ENCODE measurements at regions of chr22 and their contacts with region 1.

Region 1: DNA sequence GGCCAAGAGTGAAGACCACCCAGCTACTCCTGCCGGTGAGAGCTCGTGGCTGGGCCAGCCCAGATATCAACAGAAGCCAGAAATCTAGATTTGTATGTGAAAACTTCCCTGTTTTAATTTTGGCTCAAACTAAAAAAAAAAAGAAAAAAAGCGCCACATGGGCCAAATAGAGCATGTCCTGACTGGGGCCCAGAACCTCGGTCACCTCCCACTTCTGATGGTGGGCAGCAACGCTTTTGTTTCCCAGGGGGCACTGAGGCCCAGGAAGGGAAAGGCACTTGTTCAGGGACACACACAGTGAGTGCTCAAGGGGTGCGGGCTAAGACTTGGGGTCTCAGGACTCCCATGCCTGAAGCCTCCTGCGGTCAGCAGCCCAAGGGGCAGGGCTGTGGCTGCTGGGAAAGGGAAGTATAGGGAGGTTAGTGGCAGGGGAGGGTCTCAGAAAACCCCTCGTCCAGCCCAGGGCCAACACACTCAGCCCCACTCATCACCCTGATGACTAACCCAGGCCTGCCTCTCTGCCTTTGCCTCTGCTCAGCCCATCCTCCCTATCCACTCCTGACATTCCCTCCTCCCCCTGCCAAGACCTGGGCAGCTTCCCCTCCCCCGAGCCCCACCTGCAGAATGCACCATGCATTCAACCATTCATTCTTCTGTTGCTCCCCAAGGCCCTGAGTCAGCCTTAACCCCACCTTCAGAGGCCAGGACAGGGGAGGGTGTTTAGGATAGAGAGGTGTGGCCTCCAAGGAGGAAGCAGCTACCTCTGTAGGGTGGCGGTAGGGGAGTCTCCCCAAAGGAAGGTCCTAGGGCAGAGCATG is 30.0 kb upstream of the TCF20 start:
- DNase-seq: peak; percentile 46
- ATAC-seq: peak; percentile 94
- H3K4me3 Mint-ChIP-seq: peak overlapping the region; percentile 81
- H3K27ac Mint-ChIP-seq: peak overlapping the region; percentile 88
- H3K4me1 Mint-ChIP-seq: peaks cover 53% of the 10 kb centered on the region
- H3K27me3 Mint-ChIP-seq: peaks cover 3% of the 10 kb centered on the region
- CTCF ChIP-seq: no peak

Region 2: DNA sequence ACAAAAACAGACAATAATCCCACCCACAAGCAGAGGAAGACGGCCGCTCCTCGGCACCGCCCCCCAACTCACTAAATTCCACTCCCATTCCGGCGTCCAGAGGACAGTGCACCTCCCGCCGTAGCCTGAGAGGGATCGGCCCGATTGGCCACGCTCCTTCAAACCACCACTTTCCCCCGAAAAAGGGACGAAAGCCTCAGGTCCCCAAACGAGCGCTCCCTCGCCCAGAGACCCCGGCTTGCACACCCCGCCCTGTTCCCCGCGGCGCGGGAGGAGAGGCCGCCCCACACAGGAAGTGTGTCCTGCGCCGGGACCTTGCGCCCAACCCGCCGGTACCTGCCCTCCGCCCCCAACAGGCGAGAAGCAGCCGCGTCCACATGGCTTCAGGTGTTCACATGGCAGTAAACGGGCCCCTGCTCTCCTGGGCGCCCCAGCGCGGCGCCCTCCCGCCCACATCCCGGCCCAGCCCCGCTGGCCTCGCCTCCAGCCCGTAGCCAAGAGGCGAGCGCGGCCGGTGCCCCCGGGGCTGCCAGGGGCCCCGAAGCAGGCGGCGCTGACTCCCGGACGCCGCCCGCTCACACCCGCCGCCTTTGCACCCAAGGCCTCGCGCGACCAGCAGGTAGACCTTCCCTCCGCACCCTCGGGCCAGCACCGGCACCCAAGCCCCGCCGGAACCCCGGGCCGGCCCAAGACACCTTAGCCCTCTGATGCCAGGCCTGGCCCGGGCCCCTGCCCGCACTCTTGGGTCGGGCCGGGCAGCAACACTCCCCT is 30.9 kb before region 1 on chr22:
- CTCF ChIA-PET with region 1: no interaction called
- POLR2A ChIA-PET with region 1: interaction called, 3 read pairs
- intact Hi-C with region 1: loop called (anchors 1 kb)
- DNase-seq: peak; percentile 60
- ATAC-seq: peak; percentile 55
- H3K4me3 Mint-ChIP-seq: peak overlapping the region; percentile 82
- H3K27ac Mint-ChIP-seq: peak overlapping the region; percentile 79
- H3K4me1 Mint-ChIP-seq: peaks cover 34% of the 10 kb centered on the region
- H3K27me3 Mint-ChIP-seq: no peaks in the 10 kb centered on the region
- CTCF ChIP-seq: no peak

Region 3: DNA sequence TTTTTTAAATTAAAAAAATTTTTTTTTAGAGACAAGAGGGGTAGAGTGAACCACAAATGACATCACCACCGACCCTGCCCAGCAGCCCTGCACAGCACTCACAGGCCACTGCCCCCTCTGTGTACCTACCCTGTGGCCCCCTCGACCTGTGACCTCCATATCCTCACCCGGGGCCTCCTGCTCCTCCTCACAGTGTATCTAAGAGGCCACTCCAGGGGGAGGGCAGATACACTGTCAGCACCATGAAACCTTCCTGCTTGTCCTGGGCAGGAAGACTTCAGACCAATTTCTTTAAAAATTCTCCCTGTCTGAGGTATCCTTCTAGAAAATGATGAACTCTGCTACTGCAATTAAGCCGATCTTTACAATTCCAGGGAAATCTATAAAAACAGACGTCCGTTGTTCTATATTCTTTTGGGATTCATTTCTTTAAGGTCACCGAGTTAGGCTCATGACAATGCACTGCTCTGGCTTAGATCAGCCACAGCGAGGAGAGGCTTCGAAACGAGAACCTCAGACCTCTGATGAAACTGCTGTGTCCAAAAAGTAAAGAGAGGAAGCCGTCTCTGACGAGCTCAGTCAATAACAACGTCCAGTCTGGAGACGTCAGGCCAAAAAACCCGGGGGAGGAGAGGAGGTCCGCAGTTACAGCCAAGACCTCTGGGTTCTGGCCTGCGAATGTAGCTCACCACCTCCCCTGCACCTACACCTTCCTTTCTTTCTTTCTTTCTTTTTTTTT is 114.3 kb after region 1 on chr22:
- CTCF ChIA-PET with region 1: no interaction called
- POLR2A ChIA-PET with region 1: interaction called, 10 read pairs
- intact Hi-C with region 1: no loop called
- DNase-seq: no peak
- ATAC-seq: no peak
- H3K4me3 Mint-ChIP-seq: no peak overlapping the region
- H3K27ac Mint-ChIP-seq: no peak overlapping the region
- H3K4me1 Mint-ChIP-seq: peaks cover 8% of the 10 kb centered on the region
- H3K27me3 Mint-ChIP-seq: peaks cover 10% of the 10 kb centered on the region
- CTCF ChIP-seq: no peak

Region 4: DNA sequence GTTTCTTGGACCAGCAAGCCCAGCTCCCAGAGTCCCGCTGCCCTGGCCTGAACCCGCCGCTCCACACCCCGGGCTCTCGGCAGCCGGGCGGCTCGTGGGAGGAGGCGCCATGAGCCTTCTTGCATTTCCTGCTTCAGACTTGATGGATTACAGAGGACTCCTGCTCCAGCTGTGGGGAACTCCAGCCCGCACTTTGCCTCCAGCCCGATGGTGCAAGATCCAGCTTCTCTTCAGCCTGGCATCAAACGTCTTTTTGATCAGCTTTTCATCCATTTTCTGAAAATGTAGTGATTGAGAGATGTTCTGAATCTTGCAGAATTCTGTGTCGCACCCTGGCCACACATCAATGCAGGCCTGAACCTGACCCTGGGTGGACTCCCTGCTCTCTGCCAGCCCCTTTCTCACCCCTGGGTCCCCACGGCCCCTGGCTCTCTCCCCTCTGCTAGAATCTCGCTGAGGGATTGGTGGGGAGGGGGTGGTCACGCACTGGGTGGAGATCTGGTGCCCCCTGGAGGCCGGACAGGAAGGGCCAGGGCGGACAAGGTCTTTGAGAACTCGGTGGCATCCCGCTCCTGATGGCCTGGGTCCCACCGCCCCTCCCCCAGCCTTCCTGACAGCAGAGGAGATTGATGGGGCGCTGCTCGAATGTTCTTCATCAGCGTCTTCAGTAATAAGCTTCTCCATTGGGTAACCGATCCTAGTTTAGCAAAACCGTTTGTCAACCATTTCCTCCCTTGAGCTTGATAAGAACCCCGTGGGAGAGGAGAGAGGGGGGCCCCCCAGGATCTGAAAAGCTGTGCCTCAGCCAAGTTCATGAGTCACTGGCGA is 143.8 kb after region 1 on chr22:
- CTCF ChIA-PET with region 1: no interaction called
- POLR2A ChIA-PET with region 1: no interaction called
- intact Hi-C with region 1: no loop called
- DNase-seq: peak; percentile 58
- ATAC-seq: peak; percentile 84
- H3K4me3 Mint-ChIP-seq: peak overlapping the region; percentile 69
- H3K27ac Mint-ChIP-seq: no peak overlapping the region
- H3K4me1 Mint-ChIP-seq: peaks cover 33% of the 10 kb centered on the region
- H3K27me3 Mint-ChIP-seq: peaks cover 7% of the 10 kb centered on the region
- CTCF ChIP-seq: no peak